GM13977 (cell line): ENCODE measurements at regions of chr1 and their contacts with region 1.

Region 1: DNA sequence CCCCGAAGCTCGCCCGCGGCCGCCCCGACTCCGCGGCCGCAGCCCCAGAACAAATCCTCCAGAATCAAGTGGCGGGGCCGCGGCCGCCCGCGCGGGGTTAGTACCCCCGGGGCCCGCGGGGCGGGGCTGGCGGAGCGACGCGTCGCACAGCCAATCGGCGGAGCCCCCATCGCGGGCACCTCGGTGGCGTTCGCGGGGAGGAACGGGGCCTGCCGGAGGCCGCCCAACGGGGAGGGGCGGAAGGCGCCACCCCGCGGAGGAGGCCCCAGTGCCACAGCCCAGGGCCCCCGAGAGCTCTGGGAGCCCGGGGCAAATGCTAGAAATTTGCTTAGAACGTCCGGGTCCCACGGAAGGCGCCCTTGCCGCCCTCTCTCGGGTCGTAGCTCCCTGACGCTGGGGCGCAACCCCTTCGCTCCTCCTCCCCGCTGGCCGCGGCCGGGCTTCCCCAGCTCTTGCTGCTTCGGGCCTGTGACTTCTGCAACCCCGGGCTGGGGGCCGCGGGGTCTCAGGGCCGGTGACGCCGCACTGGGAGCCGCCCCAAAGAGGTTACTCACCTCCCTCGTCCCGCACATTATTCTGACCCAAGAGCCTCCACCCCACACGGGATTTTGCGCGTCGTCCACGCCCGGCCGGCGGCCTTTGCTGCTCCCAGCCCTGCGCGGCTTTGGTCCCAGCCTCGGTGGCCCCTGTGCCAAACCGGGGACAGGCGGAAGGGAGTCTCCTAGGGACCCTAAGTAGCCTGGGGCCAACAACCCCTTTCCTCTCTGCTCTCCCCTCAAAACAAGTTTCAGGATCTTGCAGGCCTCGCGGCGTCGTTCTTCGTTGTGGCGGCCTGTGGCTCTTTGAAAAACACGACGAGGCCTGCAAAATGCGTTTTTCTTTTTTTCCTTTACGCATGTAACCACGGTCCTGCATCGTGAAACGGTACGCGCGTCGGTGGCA is at the start of gene RUNX3:
- DNase-seq: peak; percentile 99
- CTCF ChIP-seq: peak; percentile 34

Region 2: DNA sequence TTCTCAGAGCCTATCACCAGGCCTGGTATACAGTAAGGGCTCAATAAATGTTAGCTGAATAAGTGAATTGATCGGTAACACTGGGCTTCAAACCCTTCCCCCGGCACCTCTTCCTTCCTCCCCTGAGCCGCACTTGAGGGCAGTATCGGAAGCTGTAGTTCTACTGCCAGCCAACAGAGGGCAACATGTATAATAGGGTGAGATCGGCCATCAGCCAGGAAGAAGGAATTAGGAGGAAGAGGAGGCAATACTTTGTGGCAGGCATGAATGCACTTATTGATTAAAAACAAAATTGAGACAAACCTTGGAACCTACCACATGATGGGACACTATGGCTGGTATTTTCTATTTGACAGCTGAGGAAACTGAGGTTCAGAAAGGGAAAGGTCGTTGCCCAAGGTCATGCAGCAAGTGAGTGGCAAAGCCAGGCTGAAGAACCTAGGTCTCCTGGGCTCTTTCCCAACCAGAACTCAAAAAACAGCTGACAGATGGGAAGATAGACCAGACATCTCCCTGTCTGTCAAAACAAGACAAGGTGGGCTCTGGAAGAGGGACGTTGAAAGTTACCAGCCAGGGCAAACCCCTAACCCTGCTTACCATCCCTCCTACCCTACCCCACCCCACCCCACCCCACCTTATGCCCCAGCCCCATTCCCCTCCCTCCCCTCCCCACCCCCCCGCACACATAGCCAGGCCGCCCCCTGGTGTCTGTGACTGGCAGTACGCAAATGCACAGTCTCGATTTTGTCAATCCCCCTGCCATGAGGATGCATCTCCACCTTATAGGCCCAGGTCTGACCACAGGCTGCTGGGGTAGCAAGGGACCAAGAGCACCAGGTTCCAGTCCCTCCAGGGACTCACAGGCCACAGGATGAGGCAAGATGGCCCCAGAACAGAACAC is 106.9 kb after region 1 on chr1:
- in situ Hi-C with region 1: loop called (anchors 10 kb)
- DNase-seq: peak; percentile 76
- CTCF ChIP-seq: peak; percentile 68

Region 3: GRCh38 chr1:25107643-25108010 is 177.2 kb after region 1 on chr1:
- in situ Hi-C with region 1: no loop called
- DNase-seq: no peak
- CTCF ChIP-seq: no peak